Right cardiac atrium (tissue), 5 donors: ENCODE measurements at regions of chr5 and their contacts with region 1.

Region 1: DNA sequence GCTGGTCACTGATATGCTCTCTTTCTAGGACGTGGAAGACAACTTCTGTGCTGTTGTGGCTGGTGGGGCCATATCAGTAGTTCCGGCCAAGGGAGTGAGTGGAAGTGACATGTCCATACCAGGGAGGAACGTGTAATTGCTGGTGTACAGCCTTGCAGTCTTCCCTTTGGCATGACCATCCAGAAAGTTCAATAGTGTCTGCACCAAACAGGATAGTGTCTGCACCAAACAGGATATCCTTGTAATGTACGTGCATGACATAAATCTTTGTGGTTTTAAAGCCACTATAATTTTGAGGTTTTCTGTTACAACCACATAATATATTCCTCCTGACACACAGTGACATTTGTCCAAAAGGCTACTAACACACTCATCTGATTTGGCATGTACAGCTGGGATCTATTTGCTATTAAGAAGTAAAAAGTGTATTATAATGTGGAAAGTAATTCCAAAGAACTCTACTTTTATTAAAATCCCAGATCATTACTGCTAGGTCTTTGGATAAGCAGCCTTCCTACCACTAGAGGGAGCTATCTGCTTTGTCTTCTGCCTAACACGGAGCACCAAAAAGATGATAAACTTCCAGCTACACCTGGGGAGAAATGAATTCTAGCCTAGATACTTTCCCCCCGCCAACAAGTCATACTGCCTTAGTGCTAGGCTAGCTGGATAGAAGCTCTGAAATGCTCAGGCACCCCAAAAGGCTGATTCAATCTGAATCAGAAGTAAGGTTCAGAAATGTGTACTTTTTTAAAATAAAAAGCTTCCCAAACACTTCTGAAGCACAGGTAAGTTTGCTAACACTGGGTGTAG is 52.7 kb downstream of the RNF145 start:
- DNase-seq: no peak
- ATAC-seq: peak; percentile 71 to 82
- H3K4me3 ChIP-seq: no peak overlapping the region
- H3K27ac ChIP-seq: no peak overlapping the region
- H3K4me1 ChIP-seq: peaks cover 1% of the 10 kb centered on the region
- H3K27me3 ChIP-seq: no peaks in the 10 kb centered on the region

Region 2: GRCh38 chr5:159252195-159252594 is 95.6 kb after region 1 on chr5:
- intact Hi-C with region 1: loop called in 1 of 4 experiments (anchors 5 kb)
- DNase-seq: no peak
- ATAC-seq: no peak
- H3K4me3 ChIP-seq: no peak overlapping the region
- H3K27ac ChIP-seq: no peak overlapping the region
- H3K4me1 ChIP-seq: no peaks in the 10 kb centered on the region
- H3K27me3 ChIP-seq: no peaks in the 10 kb centered on the region

Region 3: GRCh38 chr5:159262859-159263567 is 106.4 kb after region 1 on chr5 and contains the start of gene UBLCP1:
- intact Hi-C with region 1: loop called in 2 of 4 experiments (anchors 5 to 10 kb)
- DNase-seq: peak; percentile 81 to 91 (median 90)
- ATAC-seq: peak; percentile 95
- H3K4me3 ChIP-seq: peak within 1 kb of the TSS; percentile 70
- H3K27ac ChIP-seq: peak within 1 kb of the TSS; percentile 78
- H3K4me1 ChIP-seq: no peaks in the 10 kb centered on the region
- H3K27me3 ChIP-seq: no peaks in the 10 kb centered on the region
- total RNA-seq, gene UBLCP1: 14.9 to 19.9 (median 17.1) TPM

Region 4: GRCh38 chr5:159316519-159317383 is 160.1 kb after region 1 on chr5:
- intact Hi-C with region 1: loop called in 1 of 4 experiments (anchors 5 kb)
- DNase-seq: no peak
- ATAC-seq: peak; percentile 24 to 35
- H3K4me3 ChIP-seq: no peak overlapping the region
- H3K27ac ChIP-seq: no peak overlapping the region
- H3K4me1 ChIP-seq: no peaks in the 10 kb centered on the region
- H3K27me3 ChIP-seq: no peaks in the 10 kb centered on the region